WTC11 (cell line): ENCODE measurements at regions of chr10 and their contacts with region 1.

Region 1: GRCh38 chr10:61835069-61835945 is 66.2 kb upstream of the ARID5B start:
- DNase-seq: no peak
- ATAC-seq: peak; percentile 68
- H3K4me3 Mint-ChIP-seq: no peak overlapping the region
- H3K27ac Mint-ChIP-seq: no peak overlapping the region
- H3K4me1 Mint-ChIP-seq: peaks cover 15% of the 10 kb centered on the region
- H3K27me3 Mint-ChIP-seq: peaks cover 6% of the 10 kb centered on the region; the same call in 1 of the 2 replicates
- CTCF ChIP-seq: peak; percentile 33

Region 2: DNA sequence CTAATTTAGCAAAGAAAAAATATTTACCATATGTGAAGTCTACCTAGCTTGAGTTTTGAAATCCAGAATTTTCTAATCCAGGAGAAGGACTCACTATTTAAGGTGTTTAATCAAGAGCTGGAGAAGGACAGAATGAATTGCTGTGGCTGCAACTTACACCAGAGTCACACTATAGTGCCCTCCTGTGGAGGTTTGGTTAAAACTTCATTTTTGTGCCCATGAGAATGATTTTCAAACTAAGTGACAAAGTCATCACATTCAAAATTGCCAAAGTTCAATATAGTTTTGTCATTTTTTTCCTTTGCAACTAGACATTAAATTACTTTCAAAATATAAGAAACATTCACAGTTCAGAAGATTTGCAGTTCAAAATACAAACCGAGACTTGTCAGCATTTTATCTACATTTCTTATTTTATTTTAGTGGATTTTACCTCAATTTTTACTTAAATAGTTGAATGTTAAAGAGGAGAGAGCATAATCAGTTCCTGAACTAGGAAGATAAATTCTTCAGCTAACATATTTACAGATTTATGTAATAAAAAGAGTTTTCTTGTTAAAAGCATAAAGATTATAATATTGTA is 101.9 kb before region 1 on chr10:
- CTCF ChIA-PET with region 1: interaction called, 11 read pairs
- POLR2A ChIA-PET with region 1: no interaction called
- DNase-seq: no peak
- ATAC-seq: peak; percentile 53; the same call in 1 of the 2 replicates
- H3K4me3 Mint-ChIP-seq: no peak overlapping the region
- H3K27ac Mint-ChIP-seq: no peak overlapping the region
- H3K4me1 Mint-ChIP-seq: peaks cover 15% of the 10 kb centered on the region
- H3K27me3 Mint-ChIP-seq: no peaks in the 10 kb centered on the region
- CTCF ChIP-seq: peak; percentile 23; the same call in 1 of the 2 replicates

Region 3: GRCh38 chr10:61822781-61823230 is 12.5 kb before region 1 on chr10:
- CTCF ChIA-PET with region 1: interaction called, 11 read pairs
- POLR2A ChIA-PET with region 1: no interaction called
- DNase-seq: no peak
- ATAC-seq: no peak
- H3K4me3 Mint-ChIP-seq: no peak overlapping the region
- H3K27ac Mint-ChIP-seq: no peak overlapping the region
- H3K4me1 Mint-ChIP-seq: peaks cover 7% of the 10 kb centered on the region
- H3K27me3 Mint-ChIP-seq: peaks cover 80% of the 10 kb centered on the region
- CTCF ChIP-seq: no peak

Region 4: GRCh38 chr10:61869774-61870525 is 34.6 kb after region 1 on chr10:
- CTCF ChIA-PET with region 1: no interaction called
- POLR2A ChIA-PET with region 1: no interaction called
- DNase-seq: no peak
- ATAC-seq: no peak
- H3K4me3 Mint-ChIP-seq: no peak overlapping the region
- H3K27ac Mint-ChIP-seq: no peak overlapping the region
- H3K4me1 Mint-ChIP-seq: no peaks in the 10 kb centered on the region
- H3K27me3 Mint-ChIP-seq: no peaks in the 10 kb centered on the region
- CTCF ChIP-seq: no peak